ENCODE measurements at regions of chr3 and their contacts with region 1.

Region 1: DNA sequence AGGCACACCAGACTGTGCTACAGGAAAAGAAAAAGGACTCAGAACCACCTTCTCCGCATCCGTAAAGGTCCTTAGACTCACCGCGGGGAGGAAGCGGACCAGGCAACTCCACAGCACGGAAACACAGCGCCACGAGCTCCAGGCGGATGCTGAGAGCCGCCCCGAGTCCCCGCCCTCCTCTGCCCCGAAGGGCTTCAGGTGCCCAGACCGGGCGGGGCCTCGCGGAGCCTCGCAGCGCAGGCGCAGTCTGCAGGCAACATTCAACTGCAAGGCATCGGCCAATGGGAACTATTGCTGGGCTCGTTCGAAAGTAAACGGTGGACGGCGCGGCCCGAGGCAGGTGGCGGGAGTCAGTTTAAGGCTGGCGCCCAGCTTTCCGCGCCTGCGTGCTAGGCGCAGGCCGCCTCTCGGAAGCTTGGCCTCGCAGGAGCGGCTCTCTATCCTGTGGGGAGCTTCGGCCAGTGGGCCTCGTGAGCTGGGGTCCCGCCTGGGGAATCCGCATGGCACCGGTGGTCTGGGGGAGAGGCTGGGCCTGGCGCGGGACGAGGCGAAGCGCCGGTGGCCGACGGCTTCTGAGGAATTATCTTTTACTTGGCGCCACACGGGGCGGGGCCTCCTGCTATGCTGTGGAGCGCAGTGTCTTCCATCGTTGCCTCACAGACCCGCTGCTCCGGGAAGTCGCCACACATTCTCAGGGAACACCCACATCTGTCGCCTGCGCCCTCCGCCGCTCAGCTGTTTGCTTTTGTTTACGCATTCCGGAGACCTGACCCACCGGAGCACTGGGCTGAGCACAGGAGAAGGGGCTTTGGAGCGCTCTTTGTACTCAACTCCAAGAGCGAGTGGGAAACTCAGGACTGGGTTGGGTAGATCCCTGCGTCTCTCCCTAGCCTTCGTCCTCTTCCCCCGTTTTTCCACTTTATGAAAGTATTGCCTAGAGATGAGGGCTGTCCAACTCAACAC is at the start of gene TRIM59:
- DNase-seq: peak; percentile 92 to 99
- ATAC-seq: peak; percentile 95 to 98 (median 96)
- H3K4me3 ChIP-seq: peak within 1 kb of the TSS; percentile 79
- H3K4me3 Mint-ChIP-seq: peak within 1 kb of the TSS; percentile 99
- H3K27ac ChIP-seq: peak within 1 kb of the TSS; percentile 88
- H3K27ac Mint-ChIP-seq: peak within 1 kb of the TSS; percentile 94 to 99
- H3K4me1 ChIP-seq: peaks cover 7% of the 10 kb centered on the region
- H3K4me1 Mint-ChIP-seq: peaks cover 29 to 30% of the 10 kb centered on the region in 2 donors
- H3K27me3 ChIP-seq: no peaks in the 10 kb centered on the region
- H3K27me3 Mint-ChIP-seq: no peaks in the 10 kb centered on the region
- CTCF ChIP-seq: no peak
- total RNA-seq, gene TRIM59: 16.7 to 20.3 (median 17.9) TPM

Region 2: DNA sequence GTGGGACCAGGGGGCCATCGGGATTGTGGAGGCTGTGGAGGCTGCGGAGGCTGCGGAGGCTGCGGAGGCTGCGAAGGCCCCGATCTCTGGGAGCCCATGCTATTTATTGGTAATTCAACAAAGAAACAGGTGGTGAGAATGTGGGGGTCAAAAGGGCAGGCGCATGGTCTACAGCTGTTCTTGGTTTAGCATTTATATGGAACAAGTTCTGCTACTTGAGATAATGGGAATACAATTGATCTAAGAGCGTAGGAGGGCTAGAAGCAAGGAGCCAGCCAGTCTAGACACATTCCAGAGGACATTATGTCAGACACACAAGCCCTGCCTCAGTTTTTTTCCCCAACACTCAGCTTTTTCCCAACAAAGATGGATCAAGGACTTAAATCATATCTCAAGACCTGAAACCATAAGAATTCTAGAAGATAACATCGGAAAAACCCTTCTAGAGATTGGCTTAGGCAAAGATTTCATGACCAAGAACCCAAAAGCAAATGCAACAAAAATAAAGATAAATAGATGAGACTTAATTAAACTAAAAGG is 204.6 kb before region 1 on chr3:
- intact Hi-C with region 1: no loop called
- DNase-seq: no peak
- ATAC-seq: no peak
- H3K4me3 ChIP-seq: no peak overlapping the region
- H3K4me3 Mint-ChIP-seq: no peak overlapping the region
- H3K27ac ChIP-seq: no peak overlapping the region
- H3K27ac Mint-ChIP-seq: no peak overlapping the region
- H3K4me1 ChIP-seq: no peaks in the 10 kb centered on the region
- H3K4me1 Mint-ChIP-seq: no peaks in the 10 kb centered on the region
- H3K27me3 ChIP-seq: no peaks in the 10 kb centered on the region
- H3K27me3 Mint-ChIP-seq: peaks cover 24 to 28% of the 10 kb centered on the region in 2 donors
- CTCF ChIP-seq: no peak

Region 3: GRCh38 chr3:160565442-160566403 is 115.8 kb after region 1 on chr3 and contains the start of gene KPNA4:
- intact Hi-C with region 1: loop called (anchors 2 kb)
- DNase-seq: peak; percentile 97 to 98
- ATAC-seq: peak; percentile 85 to 96 (median 89)
- H3K4me3 ChIP-seq: peak within 1 kb of the TSS; percentile 86
- H3K4me3 Mint-ChIP-seq: peak within 1 kb of the TSS; percentile 95
- H3K27ac ChIP-seq: peak within 1 kb of the TSS; percentile 98
- H3K27ac Mint-ChIP-seq: peak within 1 kb of the TSS; percentile 91 to 99
- H3K4me1 ChIP-seq: peaks cover 14% of the 10 kb centered on the region
- H3K4me1 Mint-ChIP-seq: peaks cover 53 to 62% of the 10 kb centered on the region in 2 donors
- H3K27me3 ChIP-seq: no peaks in the 10 kb centered on the region
- H3K27me3 Mint-ChIP-seq: no peaks in the 10 kb centered on the region
- CTCF ChIP-seq: no peak
- total RNA-seq, gene KPNA4: 69.1 to 81.7 (median 74.1) TPM